Naive thymus-derived CD8-positive, alpha-beta T cell (primary cell): ENCODE measurements at regions of chr10 and their contacts with region 1.

Region 1: GRCh38 chr10:72215652-72216549 is at the starts of genes ANAPC16 and ASCC1:
- DNase-seq: peak; percentile 88 to 99 (median 96)
- ATAC-seq: peak; percentile 79 to 81
- H3K4me3 Mint-ChIP-seq: peak within 1 kb of the TSS; percentile 91 to 100 (median 98)
- H3K27ac Mint-ChIP-seq: peak within 1 kb of the TSS; percentile 94 to 100 (median 99)
- H3K4me1 Mint-ChIP-seq: peaks cover 17 to 67% (median 51%) of the 10 kb centered on the region in 4 donors
- H3K27me3 Mint-ChIP-seq: no peaks in the 10 kb centered on the region
- polyA plus RNA-seq, gene ANAPC16: 419 to 453 (median 444) TPM
- polyA plus RNA-seq, gene ASCC1: 21.2 to 44.4 (median 31.4) TPM

Region 2: DNA sequence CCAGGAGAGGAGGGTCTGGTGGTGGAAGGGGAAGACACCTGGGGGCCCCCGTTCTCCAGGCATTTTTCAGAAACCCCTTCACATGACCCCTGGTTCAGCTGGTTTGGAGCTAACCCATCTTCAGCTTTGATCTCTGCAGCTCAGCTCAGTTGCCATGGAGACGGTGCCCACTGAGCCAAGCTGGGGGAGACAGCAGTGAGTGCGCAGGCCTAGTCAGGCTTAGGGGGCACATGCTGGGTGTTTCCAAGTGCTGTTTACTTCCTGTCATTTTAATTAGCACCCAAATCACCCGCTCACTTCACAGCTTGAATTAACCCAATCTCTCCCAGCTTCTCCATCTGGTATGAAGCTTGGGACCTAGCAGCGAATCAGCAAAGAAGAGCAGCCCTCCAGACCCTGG is 136.5 kb before region 1 on chr10:
- POLR2A ChIA-PET with region 1: interaction called, 74 read pairs
- DNase-seq: peak; percentile 80 to 98 (median 92)
- ATAC-seq: peak; percentile 75 to 81
- H3K4me3 Mint-ChIP-seq: peak overlapping the region; percentile 88 to 96 (median 94)
- H3K27ac Mint-ChIP-seq: peak overlapping the region; percentile 92 to 99 (median 97)
- H3K4me1 Mint-ChIP-seq: peaks cover 57 to 99% (median 95%) of the 10 kb centered on the region in 4 donors
- H3K27me3 Mint-ChIP-seq: peaks cover 0 to 1% (median 0%) of the 10 kb centered on the region in 5 donors

Region 3: GRCh38 chr10:72248468-72249151 is 32.7 kb after region 1 on chr10:
- POLR2A ChIA-PET with region 1: interaction called, 43 read pairs
- DNase-seq: peak; percentile 46 to 92 (median 81)
- ATAC-seq: peak; percentile 82 to 86
- H3K4me3 Mint-ChIP-seq: peak overlapping the region; percentile 70 to 91 (median 86)
- H3K27ac Mint-ChIP-seq: peak overlapping the region; percentile 93 to 99 (median 98)
- H3K4me1 Mint-ChIP-seq: peaks cover 49 to 95% (median 90%) of the 10 kb centered on the region in 4 donors
- H3K27me3 Mint-ChIP-seq: no peaks in the 10 kb centered on the region

Region 4: DNA sequence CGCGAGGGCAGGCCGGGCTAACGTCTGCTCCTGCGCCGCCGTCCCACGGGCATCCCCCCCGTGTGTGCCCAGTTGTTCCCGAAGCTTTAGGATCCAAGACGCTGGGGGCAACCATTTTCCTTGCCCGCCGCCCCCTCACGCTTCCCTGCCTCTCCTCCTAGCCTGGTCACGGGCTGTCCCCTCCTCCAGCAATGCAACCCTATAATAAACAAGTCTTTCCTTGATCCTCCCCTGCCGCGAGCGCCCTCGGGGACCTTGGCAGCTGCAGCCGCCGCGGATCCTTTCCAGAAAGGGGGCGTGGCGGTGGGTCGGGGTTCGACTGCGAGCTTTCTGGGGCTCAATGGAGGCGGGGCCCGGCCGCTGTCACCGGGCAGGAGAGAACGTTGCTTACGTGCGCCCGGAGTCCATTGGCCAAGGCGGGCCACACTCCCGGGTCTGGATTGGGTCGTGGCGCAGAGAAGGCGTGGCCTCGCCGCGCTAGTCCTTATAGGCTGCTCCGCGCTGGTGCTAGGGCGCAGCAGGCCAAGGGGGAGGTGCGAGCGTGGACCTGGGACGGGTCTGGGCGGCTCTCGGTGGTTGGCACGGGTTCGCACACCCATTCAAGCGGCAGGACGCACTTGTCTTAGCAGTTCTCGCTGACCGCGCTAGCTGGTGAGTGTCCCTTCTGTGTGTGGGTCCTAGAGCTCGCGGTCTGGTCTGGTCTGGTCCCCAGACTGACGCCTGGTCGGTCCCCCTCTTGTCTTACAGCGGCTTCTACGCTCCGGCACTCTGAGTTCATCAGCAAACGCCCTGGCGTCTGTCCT is 57.7 kb after region 1 on chr10 and contains the start of gene DDIT4:
- POLR2A ChIA-PET with region 1: interaction called, 23 read pairs
- DNase-seq: peak; percentile 93 to 98 (median 97)
- ATAC-seq: peak; percentile 92 to 93
- H3K4me3 Mint-ChIP-seq: peak within 1 kb of the TSS; percentile 94 to 100 (median 98)
- H3K27ac Mint-ChIP-seq: peak within 1 kb of the TSS; percentile 89 to 99 (median 96)
- H3K4me1 Mint-ChIP-seq: peaks cover 28 to 61% (median 55%) of the 10 kb centered on the region in 4 donors
- H3K27me3 Mint-ChIP-seq: no peaks in the 10 kb centered on the region
- polyA plus RNA-seq, gene DDIT4: 68.0 to 190 (median 189) TPM

Region 5: DNA sequence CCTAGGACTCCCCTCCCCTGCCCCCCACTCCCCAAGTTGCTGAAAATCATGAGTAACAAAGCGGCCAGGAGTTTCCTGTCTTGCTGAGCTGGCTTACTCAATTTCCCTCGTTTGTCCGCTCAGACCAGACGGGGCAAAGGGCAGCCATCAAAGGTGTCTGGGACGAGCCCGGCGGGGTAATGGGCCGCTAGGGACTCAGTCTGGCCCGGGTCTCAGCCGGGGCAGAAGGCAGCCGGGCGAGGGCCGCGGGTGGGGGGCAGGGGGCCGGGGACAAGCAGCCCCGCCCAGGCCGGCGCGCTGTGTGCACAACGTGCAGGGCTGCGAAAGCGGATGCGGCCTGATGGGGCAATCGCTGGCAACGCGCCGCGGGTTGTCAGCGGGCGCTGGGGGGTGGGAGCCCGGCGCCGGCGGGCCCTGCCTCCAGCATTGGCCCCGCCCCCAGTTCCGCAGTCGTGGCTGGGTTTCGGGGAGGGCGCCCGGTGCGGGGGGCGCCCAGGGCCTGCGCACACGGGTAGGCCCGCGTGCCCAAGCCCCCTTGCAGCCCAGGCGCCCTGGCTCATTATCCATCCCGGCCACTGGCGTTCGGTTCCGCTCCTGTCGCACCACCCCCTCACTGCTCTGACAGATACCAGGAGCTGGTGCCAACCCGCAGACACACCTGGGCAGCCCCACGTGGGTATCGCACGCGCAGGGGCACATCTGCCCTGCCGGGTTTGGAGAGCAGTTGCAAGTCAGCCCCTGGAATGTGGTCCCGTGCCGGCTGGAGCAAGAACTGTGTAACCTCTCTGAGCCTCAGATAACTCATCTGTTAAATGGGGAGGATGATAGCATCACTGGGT is 103.7 kb after region 1 on chr10:
- POLR2A ChIA-PET with region 1: interaction called, 35 read pairs
- DNase-seq: peak; percentile 78 to 93 (median 88)
- ATAC-seq: peak; percentile 71 to 82
- H3K4me3 Mint-ChIP-seq: peak overlapping the region; percentile 67 to 85 (median 82)
- H3K27ac Mint-ChIP-seq: peak overlapping the region; percentile 90 to 99 (median 98)
- H3K4me1 Mint-ChIP-seq: peaks cover 46 to 90% (median 88%) of the 10 kb centered on the region in 4 donors
- H3K27me3 Mint-ChIP-seq: no peaks in the 10 kb centered on the region